Cardiac septum (tissue), 1 donor: ENCODE measurements at regions of chr1 and their contacts with region 1.

Region 1: DNA sequence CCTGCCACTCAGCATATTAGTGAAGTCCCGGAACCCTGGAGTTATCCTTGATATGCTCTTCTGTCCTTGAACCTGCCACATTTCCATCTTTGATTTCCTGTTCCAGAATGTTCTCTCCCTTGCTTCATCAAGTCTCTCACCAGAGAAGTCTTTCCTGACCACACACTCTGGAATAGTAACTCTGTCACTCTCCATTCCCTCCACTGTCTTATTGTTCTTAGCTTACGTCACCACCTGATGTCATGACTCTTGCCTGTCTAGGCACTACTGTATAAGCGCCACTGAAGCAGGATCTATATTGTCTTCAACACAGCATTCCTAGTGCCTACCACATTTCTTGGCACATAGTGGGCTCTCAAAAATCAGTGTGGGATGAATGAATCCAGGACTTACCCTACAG is 65.4 kb upstream of the SMYD2 start:
- DNase-seq: no peak

Region 2: GRCh38 chr1:214261206-214262123 is 45.9 kb after region 1 on chr1:
- intact Hi-C with region 1: loop called (anchors 2 kb)
- DNase-seq: peak; percentile 93

Region 3: DNA sequence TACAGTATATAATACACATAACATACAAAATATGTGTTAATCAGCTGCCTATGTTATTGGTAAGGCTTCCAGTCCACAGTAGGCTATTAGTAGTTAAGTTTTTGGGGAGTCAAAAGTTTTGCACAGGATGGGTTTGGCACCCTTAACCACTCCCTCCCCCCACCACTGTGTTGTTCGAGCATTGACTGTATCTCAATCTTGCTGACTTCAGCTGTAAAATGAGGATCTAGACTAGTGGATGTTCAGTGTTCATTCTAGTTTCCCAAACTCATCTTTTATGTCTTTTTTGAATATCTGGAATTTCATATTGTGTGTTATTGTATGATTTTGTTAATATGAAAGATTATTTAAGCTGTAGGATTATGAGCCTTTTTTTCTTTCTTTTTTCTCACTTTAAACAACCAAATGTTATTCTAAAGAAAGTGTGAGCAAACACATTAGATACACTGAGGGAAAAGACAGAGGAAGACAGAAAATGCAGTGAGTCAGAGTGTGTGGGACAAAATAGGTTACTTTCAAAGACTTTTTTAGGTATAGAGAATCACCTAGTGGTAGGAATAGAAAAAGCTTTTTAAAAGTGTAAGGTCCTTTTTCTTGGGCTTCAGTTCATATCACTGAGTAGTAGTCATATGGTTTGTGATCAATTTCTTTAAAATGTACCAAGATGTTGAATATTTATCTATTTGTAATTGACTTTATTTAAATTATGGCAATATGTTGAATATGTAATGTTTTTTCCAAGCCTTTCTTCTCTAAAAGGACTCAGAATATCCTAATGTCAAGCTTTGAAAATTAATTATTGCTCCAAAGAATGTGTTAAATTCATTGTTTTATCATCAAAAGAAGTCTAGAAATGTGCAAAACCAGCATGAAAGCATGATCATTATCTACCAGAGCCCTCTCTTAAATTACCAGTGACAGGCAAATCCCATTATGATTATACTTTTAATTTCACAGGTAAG is 369.5 kb after region 1 on chr1:
- intact Hi-C with region 1: loop called (anchors 2 kb)
- DNase-seq: no peak